Prostate gland (tissue), 2 donors: ENCODE measurements at regions of chr20 and their contacts with region 1.

Region 1: GRCh38 chr20:19661717-19662636 is 96.1 kb upstream of the RIN2 start:
- DNase-seq: peak; percentile 61
- H3K4me3 ChIP-seq: no peak overlapping the region
- H3K27ac ChIP-seq: no peak overlapping the region
- H3K4me1 ChIP-seq: no peaks in the 10 kb centered on the region
- H3K27me3 ChIP-seq: no peaks in the 10 kb centered on the region
- CTCF ChIP-seq: peak; percentile 92 to 95 (median 94)
- POLR2A ChIP-seq: no peak

Region 2: DNA sequence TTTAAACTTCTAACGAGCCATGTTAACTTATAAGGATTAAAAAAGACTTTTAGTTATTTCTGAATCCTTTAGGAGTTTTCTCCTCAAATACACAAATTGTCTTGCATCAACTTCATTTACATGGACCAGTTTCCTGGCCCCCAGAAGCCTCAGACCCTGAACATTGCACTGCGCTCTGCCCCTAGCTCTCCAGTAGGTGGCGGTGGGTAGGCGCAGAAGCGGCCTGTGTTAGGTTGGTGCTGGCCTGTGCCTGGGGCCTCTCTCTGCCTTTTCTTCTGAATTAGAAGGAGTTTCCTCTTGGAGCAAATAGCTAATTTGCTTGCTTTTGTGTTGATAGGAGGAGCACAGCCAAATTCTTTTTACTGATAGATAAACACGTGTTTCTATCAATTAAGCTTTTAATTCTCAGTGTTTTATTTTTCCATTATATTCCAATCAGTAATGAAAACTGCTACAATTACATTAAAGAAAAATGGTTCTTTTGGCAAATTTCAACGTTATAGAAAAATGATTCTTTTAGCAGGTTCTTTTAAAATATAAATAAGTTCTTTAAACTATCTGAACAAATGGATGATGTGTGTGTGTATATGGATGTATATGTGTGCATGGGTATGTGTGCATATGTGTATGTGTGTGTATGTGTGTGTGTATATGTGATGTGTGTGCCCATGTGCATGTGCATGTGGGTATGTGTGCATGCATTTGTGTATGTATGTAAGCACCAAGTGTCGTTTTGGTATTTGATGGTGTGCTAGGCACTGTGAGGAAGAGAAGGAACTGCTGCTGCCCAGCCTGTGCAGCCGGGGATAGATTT is 1029.6 kb before region 1 on chr20:
- intact Hi-C with region 1: loop called (anchors 5 kb)
- DNase-seq: peak; percentile 39
- H3K4me3 ChIP-seq: no peak overlapping the region
- H3K27ac ChIP-seq: no peak overlapping the region
- H3K4me1 ChIP-seq: no peaks in the 10 kb centered on the region
- H3K27me3 ChIP-seq: no peaks in the 10 kb centered on the region
- CTCF ChIP-seq: peak; percentile 30 to 78 (median 70)
- POLR2A ChIP-seq: no peak

Region 3: GRCh38 chr20:18904624-18905023 is 757.4 kb before region 1 on chr20:
- intact Hi-C with region 1: loop called (anchors 5 kb)
- DNase-seq: no peak
- H3K4me3 ChIP-seq: no peak overlapping the region
- H3K27ac ChIP-seq: no peak overlapping the region
- H3K4me1 ChIP-seq: no peaks in the 10 kb centered on the region
- H3K27me3 ChIP-seq: no peaks in the 10 kb centered on the region
- CTCF ChIP-seq: peak in 2 of 4 experiments; percentile 23 to 32
- POLR2A ChIP-seq: no peak

Region 4: DNA sequence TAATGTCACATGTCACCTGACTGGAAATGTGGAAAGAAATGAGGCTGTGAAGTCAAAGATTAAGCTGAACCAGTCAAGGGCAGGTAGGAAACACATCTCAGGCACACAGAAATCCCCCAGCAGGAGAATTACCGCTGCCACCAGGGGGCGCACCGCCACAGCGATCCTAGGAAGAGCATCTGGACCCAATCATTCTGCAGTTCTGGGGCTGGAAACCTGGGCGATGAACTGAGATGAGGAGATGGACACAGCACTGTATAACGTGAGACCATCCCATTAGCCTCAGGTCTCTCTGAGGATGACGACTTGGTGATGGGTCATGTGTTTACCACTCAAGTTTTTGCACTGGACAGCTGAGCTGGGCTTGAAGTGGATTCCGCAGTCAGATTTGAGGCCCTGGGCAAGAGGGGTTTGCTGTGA is 456.0 kb before region 1 on chr20:
- intact Hi-C with region 1: loop called (anchors 2 kb)
- DNase-seq: peak; percentile 62
- H3K4me3 ChIP-seq: no peak overlapping the region
- H3K27ac ChIP-seq: no peak overlapping the region
- H3K4me1 ChIP-seq: no peaks in the 10 kb centered on the region
- H3K27me3 ChIP-seq: no peaks in the 10 kb centered on the region
- CTCF ChIP-seq: peak; percentile 84 to 96 (median 90)
- POLR2A ChIP-seq: no peak

Region 5: DNA sequence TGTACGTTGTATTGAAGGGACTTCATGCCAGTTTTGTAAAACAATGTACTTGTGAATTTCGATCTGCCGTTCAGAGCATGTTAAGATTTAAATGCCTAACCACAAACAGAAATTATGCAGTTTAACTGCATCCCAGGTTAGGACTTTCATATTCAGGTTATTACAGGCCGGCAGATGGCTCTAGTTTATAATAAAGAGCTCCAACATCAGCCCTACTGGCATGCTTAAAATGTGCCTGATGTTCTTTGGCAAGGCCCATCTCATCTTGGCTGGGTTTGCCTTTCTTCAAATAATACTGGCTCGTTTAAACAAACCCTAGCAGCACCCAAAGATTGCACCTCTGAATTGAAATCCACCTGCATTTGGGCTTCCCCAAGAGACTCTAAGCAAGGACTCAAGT is 73.2 kb before region 1 on chr20:
- intact Hi-C with region 1: loop called (anchors 2 kb)
- DNase-seq: peak; percentile 62
- H3K4me3 ChIP-seq: no peak overlapping the region
- H3K27ac ChIP-seq: no peak overlapping the region
- H3K4me1 ChIP-seq: no peaks in the 10 kb centered on the region
- H3K27me3 ChIP-seq: no peaks in the 10 kb centered on the region
- CTCF ChIP-seq: peak in 1 of 4 experiments; percentile 52
- POLR2A ChIP-seq: no peak